ENCODE measurements at regions of chr11 and their contacts with region 1.

Region 1: GRCh38 chr11:61516675-61517572 is 8.4 kb downstream of the LRRC10B start:
- DNase-seq: peak; percentile 30
- H3K4me3 Mint-ChIP-seq: no peak overlapping the region
- H3K27ac Mint-ChIP-seq: no peak overlapping the region
- H3K4me1 Mint-ChIP-seq: no peaks in the 10 kb centered on the region
- H3K27me3 Mint-ChIP-seq: no peaks in the 10 kb centered on the region
- CTCF ChIP-seq: peak; percentile 99

Region 2: DNA sequence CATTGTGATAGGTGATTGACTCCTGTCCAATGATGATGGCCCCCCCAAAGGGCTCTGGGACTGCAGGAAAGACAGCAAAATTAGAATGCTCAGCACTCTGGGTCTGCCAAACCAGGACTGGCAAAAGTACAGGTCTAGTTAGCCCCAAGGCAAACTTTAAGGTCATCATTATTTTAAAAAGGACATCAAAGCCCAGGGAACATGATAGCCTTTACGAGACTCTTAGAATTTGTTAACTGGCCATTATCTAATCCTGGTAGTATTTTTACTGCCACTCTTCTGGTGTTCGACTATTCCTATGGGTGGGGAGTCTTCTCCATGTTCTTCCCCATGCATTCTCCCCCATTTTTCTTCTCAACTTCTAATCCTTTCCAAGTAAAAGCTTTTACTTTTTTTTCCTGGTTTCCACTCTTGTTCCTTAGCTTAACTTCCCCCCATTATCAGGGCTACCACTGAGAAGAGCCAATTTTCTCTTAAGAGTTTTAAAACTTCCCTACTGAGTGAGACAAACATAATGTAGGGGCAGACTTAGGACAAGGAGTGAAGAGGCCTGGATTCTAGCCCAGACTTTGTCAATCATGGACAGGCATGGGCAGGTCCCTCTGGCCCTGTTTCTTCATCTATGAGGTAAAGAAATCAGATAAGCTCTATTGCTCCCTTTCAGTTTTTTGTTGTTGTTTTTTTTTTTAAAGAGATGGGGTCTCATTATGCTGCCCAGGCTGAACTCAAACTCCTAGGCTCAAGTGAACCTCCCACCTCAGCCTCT is 191.1 kb before region 1 on chr11:
- CTCF ChIA-PET with region 1: no interaction called
- POLR2A ChIA-PET with region 1: no interaction called
- intact Hi-C with region 1: no loop called
- DNase-seq: peak; percentile 81
- H3K4me3 Mint-ChIP-seq: peak overlapping the region; percentile 63
- H3K27ac Mint-ChIP-seq: peak overlapping the region; percentile 90
- H3K4me1 Mint-ChIP-seq: peaks cover 40% of the 10 kb centered on the region
- H3K27me3 Mint-ChIP-seq: no peaks in the 10 kb centered on the region
- CTCF ChIP-seq: no peak

Region 3: GRCh38 chr11:61384271-61385242 is 132.4 kb before region 1 on chr11:
- CTCF ChIA-PET with region 1: no interaction called
- POLR2A ChIA-PET with region 1: no interaction called
- intact Hi-C with region 1: no loop called
- DNase-seq: peak; percentile 61
- H3K4me3 Mint-ChIP-seq: no peak overlapping the region
- H3K27ac Mint-ChIP-seq: no peak overlapping the region
- H3K4me1 Mint-ChIP-seq: peaks cover 11% of the 10 kb centered on the region
- H3K27me3 Mint-ChIP-seq: no peaks in the 10 kb centered on the region
- CTCF ChIP-seq: peak; percentile 25

Region 4: GRCh38 chr11:61429691-61430582 is 87.0 kb before region 1 on chr11 and contains the starts of genes CPSF7 and SDHAF2:
- CTCF ChIA-PET with region 1: interaction called, 13 read pairs
- POLR2A ChIA-PET with region 1: interaction called, 4 read pairs
- intact Hi-C with region 1: no loop called
- DNase-seq: peak; percentile 93
- H3K4me3 Mint-ChIP-seq: peak within 1 kb of the TSS; percentile 98
- H3K27ac Mint-ChIP-seq: peak within 1 kb of the TSS; percentile 99
- H3K4me1 Mint-ChIP-seq: no peaks in the 10 kb centered on the region
- H3K27me3 Mint-ChIP-seq: no peaks in the 10 kb centered on the region
- CTCF ChIP-seq: no peak
- total RNA-seq, gene CPSF7: 99.9 and 111 TPM in 2 replicates
- total RNA-seq, gene SDHAF2: 30.1 and 34.6 TPM in 2 replicates

Region 5: DNA sequence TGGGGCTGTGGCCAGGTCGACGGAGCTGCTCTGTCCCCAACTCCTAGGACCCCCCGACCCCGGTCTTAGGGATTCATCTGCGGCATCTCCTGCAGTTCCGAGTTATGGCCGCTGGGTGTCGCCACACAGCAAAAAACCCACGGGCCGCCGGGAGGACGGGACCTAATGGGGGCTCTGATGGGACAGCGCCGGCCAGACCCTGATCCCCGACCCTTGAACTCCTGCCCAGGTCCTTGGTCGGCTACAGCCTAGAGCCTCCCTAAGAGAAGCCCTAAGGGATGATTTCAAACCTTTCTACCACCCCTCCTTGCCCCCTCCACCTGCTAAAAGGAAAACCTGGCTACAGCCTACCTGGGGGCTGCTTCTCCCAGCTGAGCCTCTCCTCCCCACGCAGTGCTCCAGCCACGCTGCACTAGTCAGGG is 39.2 kb before region 1 on chr11:
- CTCF ChIA-PET with region 1: interaction called, 80 read pairs
- POLR2A ChIA-PET with region 1: interaction called, 3 read pairs
- intact Hi-C with region 1: loop called (anchors 1 kb)
- DNase-seq: peak; percentile 27
- H3K4me3 Mint-ChIP-seq: no peak overlapping the region
- H3K27ac Mint-ChIP-seq: no peak overlapping the region
- H3K4me1 Mint-ChIP-seq: peaks cover 9% of the 10 kb centered on the region
- H3K27me3 Mint-ChIP-seq: no peaks in the 10 kb centered on the region
- CTCF ChIP-seq: peak; percentile 88

Region 6: GRCh38 chr11:61532139-61533038 is 15.5 kb after region 1 on chr11:
- CTCF ChIA-PET with region 1: interaction called, 77 read pairs
- POLR2A ChIA-PET with region 1: no interaction called
- intact Hi-C with region 1: no loop called
- DNase-seq: peak; percentile 67
- H3K4me3 Mint-ChIP-seq: no peak overlapping the region
- H3K27ac Mint-ChIP-seq: no peak overlapping the region
- H3K4me1 Mint-ChIP-seq: peaks cover 19% of the 10 kb centered on the region
- H3K27me3 Mint-ChIP-seq: no peaks in the 10 kb centered on the region
- CTCF ChIP-seq: peak; percentile 72

Region 7: GRCh38 chr11:61581030-61581928 is 64.4 kb after region 1 on chr11 and contains the start of gene SYT7:
- CTCF ChIA-PET with region 1: interaction called, 13 read pairs
- POLR2A ChIA-PET with region 1: no interaction called
- intact Hi-C with region 1: no loop called
- DNase-seq: peak; percentile 95
- H3K4me3 Mint-ChIP-seq: peak within 1 kb of the TSS; percentile 71
- H3K27ac Mint-ChIP-seq: no peak within 1 kb of the TSS
- H3K4me1 Mint-ChIP-seq: peaks cover 12% of the 10 kb centered on the region
- H3K27me3 Mint-ChIP-seq: no peaks in the 10 kb centered on the region
- CTCF ChIP-seq: no peak
- total RNA-seq, gene SYT7: 25.2 and 57.7 TPM in 2 replicates

Region 8: DNA sequence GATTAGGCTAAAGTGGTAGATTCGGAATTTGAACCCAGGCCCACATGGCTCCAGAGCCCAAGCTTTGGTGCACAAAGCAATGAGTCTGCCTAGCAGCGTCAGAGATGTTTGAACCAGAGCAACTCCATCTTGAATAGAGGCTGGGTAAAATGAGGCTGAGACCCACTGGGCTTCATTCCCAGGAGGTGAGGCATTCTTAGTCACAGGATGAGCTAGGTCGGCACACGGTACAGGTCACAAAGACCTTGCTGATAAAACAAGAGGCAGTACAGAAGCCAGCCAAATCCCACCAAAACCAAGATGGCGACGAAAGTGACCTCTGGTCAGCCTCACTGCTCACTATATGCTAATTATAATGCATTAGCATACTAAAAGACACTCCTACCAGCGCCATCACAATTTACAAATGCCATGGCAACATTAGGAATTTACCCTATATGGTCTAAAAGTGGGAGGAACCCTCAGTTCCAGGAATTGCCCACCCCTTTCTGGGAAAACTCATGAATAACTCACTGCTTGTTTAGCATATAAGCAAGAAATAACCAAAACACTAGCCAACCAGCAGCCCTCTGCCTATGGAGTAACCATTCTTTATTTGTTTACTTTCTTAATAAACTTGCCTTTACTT is 123.0 kb after region 1 on chr11:
- CTCF ChIA-PET with region 1: interaction called, 13 read pairs
- POLR2A ChIA-PET with region 1: no interaction called
- intact Hi-C with region 1: no loop called
- DNase-seq: no peak
- H3K4me3 Mint-ChIP-seq: no peak overlapping the region
- H3K27ac Mint-ChIP-seq: no peak overlapping the region
- H3K4me1 Mint-ChIP-seq: no peaks in the 10 kb centered on the region
- H3K27me3 Mint-ChIP-seq: peaks cover 27% of the 10 kb centered on the region
- CTCF ChIP-seq: no peak

Measured in MCF 10A (cell line).